Posterior vena cava (tissue), 2 donors: ENCODE measurements at regions of chr20 and their contacts with region 1.

Region 1: DNA sequence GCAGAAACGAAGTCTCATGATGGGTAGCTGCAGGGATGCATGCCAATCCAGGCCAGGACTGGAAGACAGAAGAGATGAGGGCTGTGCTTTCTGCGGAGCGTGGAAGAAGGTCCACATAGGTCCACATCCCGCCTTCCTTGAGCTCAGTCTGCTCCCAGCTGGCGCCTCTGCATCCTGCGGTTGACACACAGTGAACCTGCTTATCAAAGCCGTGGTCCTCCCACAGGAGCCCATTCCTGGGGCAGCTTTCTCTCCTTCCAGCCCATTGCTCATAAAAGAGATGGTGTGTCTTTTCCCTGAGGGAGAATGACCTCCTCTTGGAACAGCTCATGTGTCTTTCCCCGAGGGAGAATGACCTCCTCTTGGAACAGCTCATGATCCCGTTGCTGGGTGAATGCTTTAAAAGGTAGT is 225.4 kb downstream of the CDH4 start:
- DNase-seq: no peak

Region 2: DNA sequence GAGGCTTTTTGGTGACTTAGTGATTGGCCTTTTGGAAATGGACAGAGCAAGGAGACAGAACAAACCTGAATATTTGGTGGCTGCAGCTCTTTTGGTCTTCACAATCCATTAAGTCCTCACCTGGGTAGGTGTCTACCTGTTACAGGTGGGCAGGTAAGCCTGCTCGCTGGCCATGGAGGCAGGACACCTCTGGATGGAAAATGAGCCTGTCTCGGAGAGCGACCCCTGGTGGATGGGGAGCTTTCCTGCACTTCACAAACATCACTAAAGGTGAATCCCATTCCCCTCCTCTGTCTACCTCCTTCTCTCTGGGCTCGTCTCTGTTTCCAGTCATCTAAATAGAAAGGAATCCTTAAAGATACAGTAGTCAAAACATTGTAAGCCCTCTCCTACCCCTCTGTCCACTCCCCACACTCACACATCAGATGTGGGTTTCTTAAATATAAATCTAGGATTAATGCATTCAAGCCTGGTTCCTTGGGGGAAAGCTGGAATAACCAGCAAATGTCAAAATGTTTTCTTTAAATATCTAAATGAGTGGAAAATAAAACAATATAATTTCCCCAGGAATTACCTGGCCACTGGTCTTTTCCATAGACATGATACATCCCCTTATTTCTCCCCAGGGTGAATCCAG is 1214.4 kb before region 1 on chr20:
- intact Hi-C with region 1: no loop called
- DNase-seq: no peak

Region 3: DNA sequence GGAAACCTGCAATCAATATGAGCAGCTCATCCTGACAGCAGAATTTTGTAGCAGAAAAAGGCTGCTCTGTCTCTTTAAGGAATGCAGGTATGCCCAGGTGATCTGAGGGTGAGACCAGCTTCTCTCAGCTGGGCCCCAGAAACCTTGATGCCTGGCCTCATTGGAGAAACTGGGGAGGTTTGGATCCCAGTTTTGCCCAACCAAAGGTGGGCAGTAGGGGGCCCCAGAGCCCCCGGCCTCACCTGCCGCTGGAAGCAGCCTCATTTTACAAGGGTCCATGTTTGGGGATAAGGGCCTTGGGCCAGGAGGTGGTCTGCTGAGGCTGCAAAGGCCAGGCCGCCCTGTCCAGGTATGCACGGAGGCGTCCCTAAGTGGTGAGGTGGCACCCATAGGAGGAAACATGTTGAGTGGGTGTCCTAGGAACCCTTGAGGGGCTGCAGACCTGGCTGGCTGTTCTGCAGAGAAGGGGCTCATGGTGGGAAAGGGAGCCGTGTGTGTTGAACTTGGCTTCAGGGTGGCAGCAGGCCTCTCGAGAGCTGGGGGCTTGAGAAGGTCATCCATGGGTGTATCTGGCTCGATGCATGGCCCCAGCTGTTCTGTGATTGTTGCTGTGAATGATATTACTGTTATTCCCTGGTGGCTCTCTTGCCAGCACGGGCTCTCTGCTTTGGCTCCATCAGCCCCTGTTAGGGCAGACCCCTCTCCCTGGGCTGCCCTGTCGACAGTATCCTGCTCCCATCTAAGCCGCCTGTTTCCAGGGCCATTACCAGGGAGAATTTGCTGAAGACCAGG is 17.0 kb before region 1 on chr20:
- intact Hi-C with region 1: loop called in 1 of 2 experiments (anchors 1 kb)
- DNase-seq: no peak